Activated CD8-positive, alpha-beta T cell treated with anti-CD3 and anti-CD28 coated beads for 36 hours (primary cell): ENCODE measurements at regions of chr17 and their contacts with region 1.

Region 1: DNA sequence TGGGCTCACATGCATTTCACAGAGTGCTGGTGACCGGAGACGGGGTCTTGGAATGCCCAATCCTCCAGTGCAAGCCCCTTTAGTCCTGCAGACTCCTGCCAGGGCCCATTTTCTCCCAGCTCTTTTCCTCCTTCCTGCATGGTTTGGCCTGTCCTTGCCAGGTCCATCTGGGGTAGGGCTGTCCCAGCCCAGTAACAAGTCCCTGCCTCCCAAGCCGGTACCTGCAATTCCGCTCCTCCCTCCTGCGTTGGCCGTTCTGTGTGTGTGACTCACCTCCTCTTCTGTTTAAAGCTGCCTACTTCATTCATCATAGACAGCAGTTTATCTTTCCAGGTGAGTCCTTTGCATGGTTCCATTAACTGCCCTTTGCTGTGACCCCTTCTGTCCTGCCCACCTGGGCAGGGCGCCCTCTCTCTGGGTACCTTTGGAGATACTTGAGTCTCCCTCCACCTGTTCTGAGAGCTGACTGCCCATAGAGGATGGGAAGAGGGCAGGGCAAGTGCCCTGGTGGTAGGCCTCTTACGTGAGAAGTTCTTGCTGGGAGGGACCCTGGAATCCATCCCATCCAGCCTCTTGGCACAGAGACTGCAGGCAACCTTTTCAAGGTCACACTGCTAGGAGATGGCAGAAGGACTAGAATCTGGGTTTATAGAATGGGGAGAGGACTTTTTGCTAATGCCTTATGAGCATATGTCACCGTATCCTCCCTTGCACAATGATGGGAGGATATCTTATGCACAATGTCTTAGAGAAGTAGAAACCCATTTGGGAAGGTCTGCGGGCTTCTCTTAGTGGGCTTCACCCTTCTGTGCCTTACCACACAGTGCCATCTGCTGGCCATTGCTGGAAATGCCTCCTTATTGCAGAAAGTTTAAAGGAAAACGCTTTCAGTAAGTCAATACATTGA is 29.7 kb upstream of the LGALS9 start:
- DNase-seq: peak; percentile 89
- ATAC-seq: peak; percentile 53
- H3K4me3 Mint-ChIP-seq: no peak overlapping the region
- H3K27ac Mint-ChIP-seq: no peak overlapping the region
- H3K4me1 Mint-ChIP-seq: peaks cover 5% of the 10 kb centered on the region
- H3K27me3 Mint-ChIP-seq: no peaks in the 10 kb centered on the region
- CTCF ChIP-seq: peak; percentile 85

Region 2: GRCh38 chr17:27353461-27354050 is 247.8 kb before region 1 on chr17:
- CTCF ChIA-PET with region 1: interaction called, 66 read pairs
- POLR2A ChIA-PET with region 1: no interaction called
- intact Hi-C with region 1: loop called (anchors 2 kb)
- DNase-seq: peak; percentile 90
- ATAC-seq: peak; percentile 88
- H3K4me3 Mint-ChIP-seq: peak overlapping the region; percentile 78
- H3K27ac Mint-ChIP-seq: peak overlapping the region; percentile 96
- H3K4me1 Mint-ChIP-seq: peaks cover 25% of the 10 kb centered on the region
- H3K27me3 Mint-ChIP-seq: no peaks in the 10 kb centered on the region
- CTCF ChIP-seq: peak; percentile 90

Region 3: DNA sequence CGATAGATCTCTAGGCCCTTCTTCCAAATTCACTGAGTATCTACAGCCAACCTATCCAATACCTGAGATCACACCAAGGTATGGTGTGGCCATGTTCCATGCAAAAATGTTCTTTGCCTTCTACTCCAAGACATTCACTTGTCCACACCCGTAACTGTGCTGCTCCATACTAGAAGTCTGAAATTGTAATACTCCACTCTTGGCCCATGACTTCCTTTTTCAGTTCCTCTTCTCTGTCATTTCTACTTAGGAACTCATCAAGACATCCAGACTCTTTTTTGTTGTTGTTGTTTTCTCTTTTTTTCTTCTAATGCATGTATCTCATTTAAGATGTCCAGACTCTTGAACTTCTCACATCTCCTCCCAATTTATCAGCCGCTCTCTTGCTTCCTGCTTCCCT is 187.5 kb before region 1 on chr17:
- CTCF ChIA-PET with region 1: interaction called, 19 read pairs
- POLR2A ChIA-PET with region 1: no interaction called
- intact Hi-C with region 1: no loop called
- DNase-seq: no peak
- ATAC-seq: no peak
- H3K4me3 Mint-ChIP-seq: no peak overlapping the region
- H3K27ac Mint-ChIP-seq: no peak overlapping the region
- H3K4me1 Mint-ChIP-seq: no peaks in the 10 kb centered on the region
- H3K27me3 Mint-ChIP-seq: peaks cover 5% of the 10 kb centered on the region
- CTCF ChIP-seq: no peak

Region 4: GRCh38 chr17:27473748-27474609 is 127.3 kb before region 1 on chr17:
- CTCF ChIA-PET with region 1: interaction called, 41 read pairs
- POLR2A ChIA-PET with region 1: interaction called, 3 read pairs
- intact Hi-C with region 1: loop called (anchors 5 kb)
- DNase-seq: peak; percentile 94
- ATAC-seq: peak; percentile 35
- H3K4me3 Mint-ChIP-seq: peak overlapping the region; percentile 40
- H3K27ac Mint-ChIP-seq: peak overlapping the region; percentile 100
- H3K4me1 Mint-ChIP-seq: peaks cover 86% of the 10 kb centered on the region
- H3K27me3 Mint-ChIP-seq: no peaks in the 10 kb centered on the region
- CTCF ChIP-seq: no peak

Region 5: DNA sequence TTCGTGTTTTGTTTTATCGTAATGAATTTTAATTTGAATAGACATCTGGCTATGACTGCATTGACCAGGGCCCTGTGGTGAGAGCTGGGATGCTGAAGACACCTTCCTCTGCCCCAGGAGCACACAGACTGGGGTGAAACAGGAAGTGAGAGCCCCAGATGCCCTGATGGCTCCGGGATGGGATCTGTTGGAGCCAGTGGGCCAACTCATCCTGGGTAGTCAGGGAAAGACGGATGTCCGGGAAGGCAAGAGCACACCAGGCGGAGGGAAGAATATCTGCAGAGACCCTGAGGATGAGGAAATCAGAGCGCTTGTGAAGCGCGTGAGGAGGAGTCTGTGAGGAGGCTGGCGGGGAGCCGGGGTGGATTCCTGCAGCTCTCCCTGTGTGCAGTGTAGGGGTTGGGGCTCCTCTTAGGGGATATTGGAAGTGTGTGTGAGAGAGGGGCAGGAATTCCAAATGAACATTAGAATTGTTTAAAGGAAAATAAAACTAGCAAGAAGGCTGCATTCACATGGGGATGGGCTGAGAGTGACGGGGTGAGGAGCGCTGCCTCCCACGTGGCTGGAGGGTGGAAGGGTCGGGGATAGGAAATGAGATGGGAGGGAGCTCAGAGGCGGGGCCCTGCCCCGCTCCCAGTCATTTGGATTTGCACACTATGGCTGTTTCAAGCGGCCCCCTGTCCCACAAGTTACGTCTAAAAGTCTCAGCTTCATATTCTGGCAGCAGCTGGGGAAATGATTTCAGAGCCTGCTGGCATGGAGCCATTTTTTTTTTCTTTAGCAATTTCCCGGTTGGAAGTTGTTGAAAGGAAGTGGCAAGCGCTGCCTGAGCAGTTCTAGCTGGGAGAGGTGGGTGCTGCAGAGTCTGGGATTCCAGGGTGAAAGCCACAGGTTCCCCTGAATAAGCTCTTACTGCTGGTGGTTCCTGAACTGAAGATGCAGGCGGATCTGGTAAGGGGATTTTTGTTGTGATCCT is 41.5 kb before region 1 on chr17:
- CTCF ChIA-PET with region 1: interaction called, 96 read pairs
- POLR2A ChIA-PET with region 1: no interaction called
- intact Hi-C with region 1: no loop called
- DNase-seq: no peak
- ATAC-seq: no peak
- H3K4me3 Mint-ChIP-seq: no peak overlapping the region
- H3K27ac Mint-ChIP-seq: no peak overlapping the region
- H3K4me1 Mint-ChIP-seq: peaks cover 24% of the 10 kb centered on the region
- H3K27me3 Mint-ChIP-seq: no peaks in the 10 kb centered on the region
- CTCF ChIP-seq: no peak

Region 6: GRCh38 chr17:27586203-27586721 is 15.1 kb before region 1 on chr17:
- CTCF ChIA-PET with region 1: interaction called, 43 read pairs
- POLR2A ChIA-PET with region 1: no interaction called
- intact Hi-C with region 1: no loop called
- DNase-seq: no peak
- ATAC-seq: no peak
- H3K4me3 Mint-ChIP-seq: no peak overlapping the region
- H3K27ac Mint-ChIP-seq: no peak overlapping the region
- H3K4me1 Mint-ChIP-seq: peaks cover 3% of the 10 kb centered on the region
- H3K27me3 Mint-ChIP-seq: no peaks in the 10 kb centered on the region
- CTCF ChIP-seq: no peak

Region 7: DNA sequence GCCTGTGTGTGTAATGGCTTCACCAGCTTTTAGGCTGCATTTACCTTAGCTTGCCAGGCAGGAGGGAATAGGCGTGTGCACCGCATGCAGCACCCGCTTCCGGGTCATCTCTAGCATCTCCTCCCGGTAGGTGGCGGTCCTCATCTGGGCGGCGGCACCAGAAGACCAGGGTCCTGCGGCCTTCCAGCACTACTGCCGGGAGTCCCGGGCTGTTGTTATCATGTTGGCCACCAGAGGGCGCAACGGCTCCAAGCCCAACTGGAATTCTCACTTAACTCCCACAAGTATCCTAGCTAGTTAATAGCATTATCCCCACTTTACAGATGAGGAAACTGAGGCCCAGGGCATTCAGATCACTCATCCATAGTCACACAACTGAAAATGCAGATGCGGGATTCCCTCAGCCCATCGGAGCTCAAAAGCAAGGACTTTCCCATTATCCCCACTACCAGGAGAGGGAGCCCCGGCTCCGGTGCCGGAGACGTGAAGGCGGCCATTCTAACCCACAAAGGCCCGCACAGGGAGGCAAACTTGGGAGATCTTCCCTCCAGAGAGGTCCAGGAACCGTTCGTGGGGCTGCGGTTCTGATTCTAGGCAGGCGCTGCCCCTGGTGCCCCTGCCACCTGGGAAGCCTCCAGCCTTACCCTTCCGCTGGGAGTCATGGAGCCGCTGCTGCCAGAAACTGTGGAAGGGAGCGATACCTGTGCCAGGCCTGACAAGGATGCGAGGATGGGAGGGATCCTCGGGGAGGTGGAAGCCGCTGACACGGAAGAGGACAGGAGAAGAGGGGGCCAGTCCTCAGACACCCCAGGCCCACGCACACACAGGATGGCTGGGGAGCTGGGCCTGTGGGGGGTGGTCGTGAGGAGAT is 53.6 kb after region 1 on chr17:
- CTCF ChIA-PET with region 1: interaction called, 152 read pairs
- POLR2A ChIA-PET with region 1: no interaction called
- intact Hi-C with region 1: loop called (anchors 5 kb)
- DNase-seq: peak; percentile 85
- ATAC-seq: peak; percentile 97
- H3K4me3 Mint-ChIP-seq: no peak overlapping the region
- H3K27ac Mint-ChIP-seq: no peak overlapping the region
- H3K4me1 Mint-ChIP-seq: peaks cover 5% of the 10 kb centered on the region
- H3K27me3 Mint-ChIP-seq: peaks cover 2% of the 10 kb centered on the region
- CTCF ChIP-seq: peak; percentile 97